Activated T-helper 2 cell treated with anti-CD3 and anti-CD28 coated beads, Interferon-gamma antibody, Interleukin-2, Interleukin-4, amounts not matched to agents 10 μg/mL and 5 μg/mL and 100 μg/mL, durations not matched to agents 14 hours and 24 hours and 36 hours (primary cell): ENCODE measurements at regions of chr3 and their contacts with region 1.

Region 1: DNA sequence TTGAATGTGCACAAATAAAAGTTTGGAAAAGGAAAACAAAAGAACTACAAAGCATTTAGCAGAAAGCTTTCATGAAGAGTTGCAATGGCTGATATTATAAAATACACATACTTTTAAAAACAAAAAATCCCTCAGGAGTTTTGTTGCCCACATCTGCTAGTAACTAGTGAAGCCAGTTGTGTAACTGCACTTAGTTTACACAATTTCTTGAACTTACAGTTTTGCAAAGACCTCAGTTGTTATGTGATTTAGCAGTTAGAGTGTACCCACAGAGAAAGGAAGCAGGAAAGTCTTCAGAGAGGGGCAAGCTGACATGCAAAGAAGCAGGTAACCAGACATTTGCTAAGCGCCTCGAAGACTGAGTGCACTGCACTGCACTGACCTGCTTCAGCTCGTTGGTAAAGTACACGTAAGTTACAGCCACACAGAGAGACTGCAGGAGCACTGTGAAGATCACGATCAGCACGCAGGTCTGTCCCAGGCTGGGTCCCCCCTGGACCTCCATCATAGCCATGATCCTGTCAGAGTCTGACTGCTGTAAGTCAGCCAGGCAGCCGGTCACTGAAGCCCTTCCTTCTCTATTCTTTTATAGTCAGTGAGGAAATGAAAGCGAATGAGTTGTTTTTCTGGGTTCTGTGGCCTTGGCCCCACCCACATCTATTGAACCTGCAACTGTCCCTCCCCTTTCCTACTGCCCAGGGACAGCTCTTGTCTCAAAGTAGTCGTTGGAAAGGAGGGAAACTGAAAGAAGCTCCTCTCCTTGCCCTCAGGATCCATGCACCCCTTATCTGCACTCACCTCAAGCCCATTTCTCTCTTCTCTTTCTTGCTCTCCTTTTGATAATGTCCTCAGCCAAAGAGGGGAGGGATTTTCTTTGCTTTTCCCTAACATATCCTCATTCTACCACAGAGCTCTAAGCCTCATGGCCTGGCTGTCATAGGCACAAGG is at the start of gene TNFSF10:
- DNase-seq: peak; percentile 79
- H3K4me3 Mint-ChIP-seq: peak within 1 kb of the TSS; percentile 98
- H3K27ac Mint-ChIP-seq: peak within 1 kb of the TSS; percentile 87
- H3K4me1 Mint-ChIP-seq: peaks cover 41% of the 10 kb centered on the region
- H3K27me3 Mint-ChIP-seq: no peaks in the 10 kb centered on the region
- total RNA-seq, gene TNFSF10: 52.3 and 54.8 TPM in 2 replicates

Region 2: GRCh38 chr3:171788546-171789351 is 734.4 kb before region 1 on chr3:
- intact Hi-C with region 1: no loop called
- DNase-seq: no peak
- H3K4me3 Mint-ChIP-seq: no peak overlapping the region
- H3K27ac Mint-ChIP-seq: no peak overlapping the region
- H3K4me1 Mint-ChIP-seq: no peaks in the 10 kb centered on the region
- H3K27me3 Mint-ChIP-seq: peaks cover 26% of the 10 kb centered on the region

Region 3: DNA sequence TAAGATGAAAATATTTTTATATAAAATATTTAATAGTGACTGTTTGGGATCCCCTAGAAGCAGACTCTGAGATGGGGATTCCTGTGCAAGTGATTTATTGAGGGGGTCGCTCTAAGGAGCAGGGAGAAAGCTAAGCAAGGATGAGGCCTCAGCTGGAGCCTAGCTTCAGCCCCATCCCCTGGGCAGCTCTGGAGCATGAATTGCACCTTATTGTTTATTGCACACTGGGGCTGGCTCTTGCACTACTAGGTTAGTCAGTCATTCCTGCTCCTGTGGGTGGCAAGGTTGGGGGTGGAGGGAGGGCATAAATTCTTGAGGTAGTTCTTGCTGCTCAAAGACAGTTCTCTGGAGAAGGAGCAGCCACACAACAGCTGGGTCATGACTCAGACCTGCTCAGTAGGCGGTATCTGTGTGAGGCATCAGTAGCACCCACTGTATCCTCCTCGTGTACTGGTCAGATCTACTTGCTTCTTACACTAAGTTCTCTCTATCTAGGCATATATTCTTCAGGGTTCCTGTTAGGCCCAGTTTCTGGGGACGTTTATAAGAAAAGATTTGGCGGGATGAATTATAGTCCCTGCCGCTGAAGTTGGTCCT is 27.3 kb after region 1 on chr3:
- intact Hi-C with region 1: loop called (anchors 2 kb)
- DNase-seq: peak; percentile 55
- H3K4me3 Mint-ChIP-seq: no peak overlapping the region
- H3K27ac Mint-ChIP-seq: peak overlapping the region; percentile 67
- H3K4me1 Mint-ChIP-seq: peaks cover 48% of the 10 kb centered on the region
- H3K27me3 Mint-ChIP-seq: no peaks in the 10 kb centered on the region

Region 4: GRCh38 chr3:172557221-172558220 is 34.4 kb after region 1 on chr3:
- intact Hi-C with region 1: loop called (anchors 1 kb)
- DNase-seq: no peak
- H3K4me3 Mint-ChIP-seq: no peak overlapping the region
- H3K27ac Mint-ChIP-seq: no peak overlapping the region
- H3K4me1 Mint-ChIP-seq: peaks cover 40% of the 10 kb centered on the region
- H3K27me3 Mint-ChIP-seq: no peaks in the 10 kb centered on the region

Region 5: DNA sequence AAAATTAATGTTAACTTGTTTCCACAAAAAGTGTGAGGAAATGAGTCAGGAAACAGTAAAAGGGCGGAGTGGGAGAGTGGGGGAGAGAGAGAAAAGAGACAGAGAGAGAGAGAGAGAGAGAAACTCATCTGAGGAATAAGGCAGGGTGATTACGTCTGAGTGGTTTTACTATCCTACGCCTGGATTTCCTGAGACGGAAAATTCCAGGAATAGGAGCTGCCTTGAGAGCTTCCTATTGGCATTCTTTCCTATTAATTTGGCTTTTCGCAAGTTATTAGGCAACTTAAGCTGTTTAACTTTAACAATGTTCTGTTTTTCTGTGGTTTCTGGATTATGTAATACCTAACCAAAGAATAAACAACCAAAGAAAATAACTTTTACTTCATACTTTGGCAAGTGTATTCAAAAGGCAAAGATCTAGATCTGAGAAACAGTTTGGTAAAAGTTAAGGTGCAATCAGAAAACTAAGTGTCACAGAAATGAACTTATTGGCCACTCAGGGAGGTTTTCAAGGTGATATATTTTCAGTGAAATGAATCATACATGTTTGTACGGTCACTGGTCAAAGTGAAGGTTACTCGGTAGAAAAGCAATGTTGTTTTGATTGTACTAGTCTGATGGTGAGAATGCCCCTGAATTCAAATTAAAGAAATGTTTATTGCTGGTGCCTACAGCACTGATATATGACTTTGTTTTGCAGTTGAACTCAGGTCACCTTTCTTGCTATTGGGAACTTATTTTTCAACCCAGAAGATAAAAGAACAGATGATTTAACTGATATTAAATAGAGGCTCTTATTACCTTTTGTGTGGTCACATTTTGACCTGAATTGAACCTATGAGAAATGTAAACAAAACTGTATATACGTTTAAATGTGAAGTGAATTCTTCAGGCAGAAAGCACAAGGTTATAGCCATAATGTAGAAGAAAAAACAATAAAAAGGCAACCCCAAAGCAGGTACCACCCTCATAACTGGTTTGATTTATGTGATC is 40.0 kb after region 1 on chr3:
- intact Hi-C with region 1: loop called (anchors 1 kb)
- DNase-seq: peak; percentile 32
- H3K4me3 Mint-ChIP-seq: peak overlapping the region; percentile 40
- H3K27ac Mint-ChIP-seq: peak overlapping the region; percentile 89
- H3K4me1 Mint-ChIP-seq: peaks cover 47% of the 10 kb centered on the region
- H3K27me3 Mint-ChIP-seq: no peaks in the 10 kb centered on the region

Region 6: GRCh38 chr3:172710664-172711453 is 187.7 kb after region 1 on chr3 and contains the start of gene NCEH1:
- intact Hi-C with region 1: loop called (anchors 2 kb)
- DNase-seq: peak; percentile 72
- H3K4me3 Mint-ChIP-seq: peak within 1 kb of the TSS; percentile 88
- H3K27ac Mint-ChIP-seq: peak within 1 kb of the TSS; percentile 27
- H3K4me1 Mint-ChIP-seq: peaks cover 19% of the 10 kb centered on the region
- H3K27me3 Mint-ChIP-seq: peaks cover 5% of the 10 kb centered on the region
- total RNA-seq, gene NCEH1: 9.6 and 10.0 TPM in 2 replicates